Left cardiac atrium (tissue), 4 donors: ENCODE measurements at regions of chr22 and their contacts with region 1.

Region 1: GRCh38 chr22:35114131-35114980 is 48.4 kb downstream of the ISX start:
- DNase-seq: no peak
- ATAC-seq: no peak

Region 2: GRCh38 chr22:35043252-35043931 is 71.0 kb before region 1 on chr22:
- intact Hi-C with region 1: no loop called
- DNase-seq: no peak
- ATAC-seq: no peak

Region 3: DNA sequence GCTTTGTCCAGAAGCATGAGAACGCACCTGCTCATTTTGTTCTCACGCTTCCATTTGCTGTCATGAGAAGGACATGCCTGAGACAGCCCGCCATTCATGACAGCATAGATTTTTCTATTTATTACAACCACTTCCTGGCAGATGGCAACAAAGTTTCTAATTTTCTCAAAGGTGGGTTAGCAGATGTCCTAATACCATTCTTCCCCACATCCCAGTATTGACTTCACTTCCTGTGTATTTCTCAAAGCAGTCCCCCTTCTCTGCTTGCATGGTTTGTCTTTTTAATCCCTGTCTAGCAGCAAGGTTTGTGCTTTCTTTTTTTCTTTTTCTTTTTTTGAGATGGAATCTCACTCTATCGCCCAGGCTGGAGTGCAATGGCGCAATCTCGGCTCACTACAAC is 45.9 kb after region 1 on chr22:
- intact Hi-C with region 1: loop called in 1 of 2 experiments (anchors 5 kb)
- DNase-seq: no peak
- ATAC-seq: no peak

Region 4: GRCh38 chr22:35589071-35589952 is 475.0 kb after region 1 on chr22:
- intact Hi-C with region 1: no loop called
- DNase-seq: no peak
- ATAC-seq: peak in 1 of 2 donors; percentile 54